IMR-90 (cell line): ENCODE measurements at regions of chr15 and their contacts with region 1.

Region 1: DNA sequence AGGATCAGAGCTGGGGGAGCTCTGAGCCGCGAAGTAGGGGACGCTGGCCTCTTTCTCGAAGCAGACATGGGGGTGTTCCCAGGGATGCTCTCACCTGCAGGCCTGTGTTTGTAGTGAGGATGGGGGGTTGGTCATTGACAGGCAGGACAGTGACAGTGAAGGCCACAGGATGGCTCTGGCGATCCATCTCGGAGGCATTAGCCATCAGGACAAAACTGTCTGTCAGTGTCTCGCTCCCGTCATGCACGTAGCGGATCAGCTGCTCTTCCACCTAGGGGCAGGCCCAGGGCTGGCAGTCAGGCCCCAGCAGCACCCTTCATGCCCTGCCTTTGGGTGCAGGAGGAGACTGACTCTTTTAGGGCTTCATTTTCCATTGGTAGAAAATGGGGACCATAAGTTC is 28.0 kb downstream of the CSPG4 start:
- DNase-seq: no peak
- ATAC-seq: no peak
- H3K4me3 ChIP-seq: no peak overlapping the region
- H3K27ac ChIP-seq: no peak overlapping the region
- H3K4me1 ChIP-seq: no peaks in the 10 kb centered on the region
- H3K27me3 ChIP-seq: no peaks in the 10 kb centered on the region
- CTCF ChIP-seq: no peak
- POLR2A ChIP-seq: no peak
- RAD21 ChIP-seq: no peak

Region 2: GRCh38 chr15:75367913-75368688 is 316.5 kb before region 1 on chr15 and contains the start of gene MAN2C1:
- CTCF ChIA-PET with region 1: no interaction called
- POLR2A ChIA-PET with region 1: no interaction called
- dilution Hi-C with region 1: no loop called
- in situ Hi-C with region 1: no loop called
- intact Hi-C with region 1: loop called (anchors 5 kb)
- DNase-seq: peak; percentile 94
- ATAC-seq: peak; percentile 93
- H3K4me3 ChIP-seq: peak within 1 kb of the TSS; percentile 71
- H3K27ac ChIP-seq: peak within 1 kb of the TSS; percentile 86
- H3K4me1 ChIP-seq: peaks cover 4% of the 10 kb centered on the region
- H3K27me3 ChIP-seq: no peaks in the 10 kb centered on the region
- CTCF ChIP-seq: peak; percentile 78
- POLR2A ChIP-seq: peak; percentile 92
- RAD21 ChIP-seq: peak; percentile 58
- total RNA-seq, gene MAN2C1: 29.7 and 34.8 TPM in 2 replicates

Region 3: DNA sequence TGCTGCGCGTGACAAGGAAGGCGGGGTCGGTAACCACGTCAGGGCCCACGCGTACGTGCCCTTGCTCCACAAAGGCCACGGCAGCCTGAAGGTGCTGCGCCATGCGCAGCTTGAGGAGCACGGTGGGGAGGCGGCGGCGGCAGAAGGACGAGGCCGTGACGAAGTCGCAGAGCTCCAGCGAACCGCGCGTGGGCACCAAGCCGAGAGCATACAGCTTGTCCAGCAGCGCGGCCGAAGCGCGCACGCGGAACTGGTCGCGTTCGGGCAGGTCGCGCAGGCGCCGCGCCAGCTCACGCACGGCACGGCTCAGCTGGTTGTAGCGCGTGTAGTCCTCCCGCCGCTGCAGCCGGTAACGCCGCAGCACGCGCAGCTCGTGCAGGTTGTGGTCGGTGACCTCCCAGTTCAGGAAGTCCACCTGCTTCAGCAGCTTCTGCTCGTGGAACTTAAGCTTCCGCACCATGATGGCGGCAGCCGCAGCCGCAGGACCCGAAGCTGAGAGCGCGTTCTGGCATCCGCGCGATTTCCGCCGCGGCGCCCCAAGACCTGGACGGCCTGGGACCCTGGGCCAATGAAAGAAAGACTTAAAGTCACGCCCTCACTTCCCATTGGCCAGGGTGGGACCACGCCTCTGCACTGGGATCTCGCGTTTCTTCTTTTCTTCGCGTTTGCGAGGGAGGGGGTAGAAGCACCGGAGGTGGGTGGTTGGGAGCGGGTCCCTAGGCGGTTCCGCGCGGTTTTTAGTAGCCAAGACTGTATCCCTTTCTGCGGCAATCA is 44.7 kb before region 1 on chr15 and contains the start of gene IMP3:
- CTCF ChIA-PET with region 1: interaction called, 3 read pairs
- POLR2A ChIA-PET with region 1: interaction called, 6 read pairs
- dilution Hi-C with region 1: no loop called
- in situ Hi-C with region 1: loop called (anchors 5 kb)
- intact Hi-C with region 1: loop called (anchors 1 kb)
- DNase-seq: peak; percentile 95
- ATAC-seq: peak; percentile 96
- H3K4me3 ChIP-seq: peak within 1 kb of the TSS; percentile 77
- H3K27ac ChIP-seq: peak within 1 kb of the TSS; percentile 92
- H3K4me1 ChIP-seq: peaks cover 4% of the 10 kb centered on the region; the same call in 1 of the 2 replicates
- H3K27me3 ChIP-seq: no peaks in the 10 kb centered on the region
- CTCF ChIP-seq: no peak
- POLR2A ChIP-seq: peak; percentile 94
- RAD21 ChIP-seq: no peak
- total RNA-seq, gene IMP3: 42.1 and 84.7 TPM in 2 replicates

Region 4: DNA sequence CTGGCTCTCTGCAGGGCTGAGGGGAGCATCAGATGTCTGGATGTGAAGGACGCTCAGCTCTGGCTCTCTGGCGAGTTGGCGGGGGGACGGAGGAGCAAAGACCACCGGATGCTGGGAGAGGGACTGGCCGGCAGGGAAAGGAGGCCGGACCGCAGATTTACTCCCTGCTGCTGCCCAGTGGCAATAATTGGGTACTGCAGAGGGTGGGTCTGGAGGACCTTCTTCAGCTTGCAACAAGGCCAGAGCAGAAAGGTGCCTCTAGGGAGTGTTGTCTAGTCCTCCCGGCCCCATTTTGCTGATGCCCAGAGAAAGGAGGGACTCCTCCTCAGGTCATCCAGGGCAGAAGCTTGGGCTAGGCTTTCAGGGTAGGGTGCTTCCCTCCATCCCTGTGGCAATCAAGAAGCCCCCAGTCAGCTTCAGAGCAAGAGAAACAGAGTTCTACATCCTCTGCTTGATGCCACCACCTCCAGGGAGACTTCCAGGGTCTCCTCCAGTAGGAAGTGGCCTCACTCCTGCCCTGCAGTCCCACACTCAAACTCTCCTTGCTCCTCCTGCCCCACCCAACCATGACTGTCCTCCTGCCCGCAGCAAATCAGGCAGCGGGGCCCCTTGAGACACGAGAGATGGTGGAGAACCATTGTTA is 48.3 kb after region 1 on chr15:
- CTCF ChIA-PET with region 1: no interaction called
- POLR2A ChIA-PET with region 1: no interaction called
- dilution Hi-C with region 1: no loop called
- in situ Hi-C with region 1: loop called (anchors 5 kb)
- intact Hi-C with region 1: loop called (anchors 1 kb)
- DNase-seq: peak; percentile 65
- ATAC-seq: peak; percentile 94
- H3K4me3 ChIP-seq: no peak overlapping the region
- H3K27ac ChIP-seq: no peak overlapping the region
- H3K4me1 ChIP-seq: peaks cover 10% of the 10 kb centered on the region
- H3K27me3 ChIP-seq: no peaks in the 10 kb centered on the region
- CTCF ChIP-seq: peak; percentile 79
- POLR2A ChIP-seq: no peak
- RAD21 ChIP-seq: peak; percentile 80

Region 5: DNA sequence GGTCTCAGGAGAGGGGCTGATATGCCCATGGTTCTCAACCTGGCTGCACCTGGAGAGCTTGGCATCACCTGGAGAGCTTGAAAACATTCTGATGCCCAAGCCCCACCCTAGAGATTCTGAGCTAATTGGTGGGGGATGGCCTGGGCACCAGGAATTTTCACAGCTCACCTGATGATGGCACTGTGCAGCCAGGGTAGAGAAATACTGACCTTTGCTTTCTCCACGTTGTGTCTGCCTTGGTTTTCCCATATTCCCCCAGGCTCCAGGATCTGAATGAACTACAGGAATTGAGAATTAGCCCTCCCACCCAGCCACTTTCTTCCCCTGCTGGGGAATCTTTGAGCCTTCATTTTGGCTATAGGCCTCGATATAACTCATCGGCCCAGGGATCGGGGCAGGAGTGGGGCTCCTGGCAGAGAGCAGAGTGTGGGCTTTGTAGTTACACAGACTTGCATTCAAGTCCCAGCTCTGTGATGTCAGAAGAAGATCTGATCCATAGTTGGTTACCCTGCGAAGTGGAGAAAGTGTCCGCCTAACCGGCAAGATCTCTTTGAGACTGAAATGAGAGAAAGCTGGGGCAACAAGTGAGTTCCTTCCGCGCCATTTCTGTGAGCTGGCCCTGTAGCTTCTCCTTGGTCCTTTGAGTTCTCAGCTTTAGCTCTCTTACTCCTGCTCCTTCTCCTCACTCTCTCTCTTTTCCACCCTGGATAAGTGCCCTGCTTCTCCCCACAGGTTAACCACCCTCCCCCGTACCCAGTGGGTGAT is 125.5 kb after region 1 on chr15:
- CTCF ChIA-PET with region 1: no interaction called
- POLR2A ChIA-PET with region 1: no interaction called
- dilution Hi-C with region 1: no loop called
- in situ Hi-C with region 1: loop called (anchors 5 kb)
- intact Hi-C with region 1: no loop called
- DNase-seq: no peak
- ATAC-seq: peak; percentile 71; the same call in 1 of the 2 replicates
- H3K4me3 ChIP-seq: no peak overlapping the region
- H3K27ac ChIP-seq: no peak overlapping the region
- H3K4me1 ChIP-seq: no peaks in the 10 kb centered on the region
- H3K27me3 ChIP-seq: peaks cover 16% of the 10 kb centered on the region
- CTCF ChIP-seq: peak; percentile 45
- POLR2A ChIP-seq: no peak
- RAD21 ChIP-seq: peak; percentile 58